Activated CD4-positive, alpha-beta memory T cell treated with anti-CD3 and anti-CD28 coated beads, Interleukin-2, amount 10 ng/mL, durations not matched to agents 7 days and 5 days (primary cell): ENCODE measurements at regions of chr17 and their contacts with region 1.

Region 1: DNA sequence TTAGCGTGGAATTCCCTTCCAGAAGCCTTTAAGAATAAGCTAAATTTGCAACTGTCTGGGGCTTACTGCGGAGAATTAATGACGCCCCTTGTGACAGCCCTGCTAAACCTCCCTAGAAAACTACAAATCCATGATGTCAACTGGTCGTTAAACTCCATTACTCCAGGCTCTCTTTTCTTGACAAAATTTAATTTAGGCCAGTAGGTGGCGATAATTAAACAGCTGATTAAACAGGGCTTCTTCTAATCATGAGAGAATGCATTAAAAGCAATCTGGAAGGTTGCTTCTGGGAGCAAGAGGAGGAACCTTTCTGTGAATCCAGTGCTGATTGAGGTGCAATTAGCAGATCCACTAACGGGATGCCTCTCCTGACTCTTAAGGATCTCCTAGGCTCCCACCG is 8.1 kb upstream of the NLRP1 start:
- DNase-seq: no peak
- H3K4me3 Mint-ChIP-seq: no peak overlapping the region
- H3K27ac Mint-ChIP-seq: no peak overlapping the region
- H3K4me1 Mint-ChIP-seq: peaks cover 2% of the 10 kb centered on the region
- H3K27me3 Mint-ChIP-seq: peaks cover 41% of the 10 kb centered on the region

Region 2: GRCh38 chr17:5571281-5571680 is 21.1 kb before region 1 on chr17:
- CTCF ChIA-PET with region 1: no interaction called
- POLR2A ChIA-PET with region 1: no interaction called
- DNase-seq: no peak
- H3K4me3 Mint-ChIP-seq: no peak overlapping the region
- H3K27ac Mint-ChIP-seq: no peak overlapping the region
- H3K4me1 Mint-ChIP-seq: peaks cover 24% of the 10 kb centered on the region
- H3K27me3 Mint-ChIP-seq: no peaks in the 10 kb centered on the region

Region 3: DNA sequence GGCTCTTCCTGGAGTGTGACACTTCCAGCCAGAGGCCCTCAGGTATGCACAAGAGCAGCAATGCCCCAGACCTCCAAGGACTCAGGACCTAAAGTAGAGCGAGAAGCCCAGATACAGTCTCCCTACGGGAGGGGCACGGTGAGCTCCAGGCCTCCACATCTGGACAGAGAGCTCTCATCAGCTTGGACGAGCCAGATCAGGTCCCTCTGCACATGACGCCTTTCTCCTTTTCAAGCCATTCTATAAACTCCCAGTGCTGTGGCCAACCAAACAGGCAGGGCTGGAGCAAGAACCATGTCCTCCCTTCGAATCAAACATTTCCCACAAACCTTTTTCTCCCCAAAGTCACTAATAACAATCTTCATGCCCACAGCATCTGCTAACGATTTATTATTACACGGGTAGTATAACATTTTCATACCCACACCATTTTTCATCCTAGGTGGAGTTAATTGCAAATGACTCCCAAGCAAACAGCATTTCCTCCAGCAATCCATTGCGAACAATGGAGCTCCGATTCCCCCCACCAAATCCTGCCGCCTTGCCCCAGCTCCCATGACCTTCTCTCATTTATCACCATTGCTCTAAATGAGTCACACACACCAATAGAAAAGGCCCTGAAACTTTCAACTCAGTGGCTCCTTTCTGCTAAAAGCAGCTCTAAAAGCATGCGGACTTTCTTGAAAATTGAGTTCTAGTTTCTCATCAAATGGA is 16.2 kb after region 1 on chr17:
- CTCF ChIA-PET with region 1: no interaction called
- POLR2A ChIA-PET with region 1: no interaction called
- DNase-seq: no peak
- H3K4me3 Mint-ChIP-seq: no peak overlapping the region
- H3K27ac Mint-ChIP-seq: no peak overlapping the region
- H3K4me1 Mint-ChIP-seq: peaks cover 20% of the 10 kb centered on the region
- H3K27me3 Mint-ChIP-seq: peaks cover 20% of the 10 kb centered on the region

Region 4: GRCh38 chr17:5619088-5619740 is 26.8 kb after region 1 on chr17:
- CTCF ChIA-PET with region 1: no interaction called
- POLR2A ChIA-PET with region 1: no interaction called
- DNase-seq: no peak
- H3K4me3 Mint-ChIP-seq: no peak overlapping the region
- H3K27ac Mint-ChIP-seq: no peak overlapping the region
- H3K4me1 Mint-ChIP-seq: no peaks in the 10 kb centered on the region
- H3K27me3 Mint-ChIP-seq: peaks cover 18% of the 10 kb centered on the region

Region 5: GRCh38 chr17:5706577-5707216 is 114.3 kb after region 1 on chr17:
- CTCF ChIA-PET with region 1: interaction called, 18 read pairs
- POLR2A ChIA-PET with region 1: interaction called, 4 read pairs
- DNase-seq: peak; percentile 61
- H3K4me3 Mint-ChIP-seq: no peak overlapping the region
- H3K27ac Mint-ChIP-seq: no peak overlapping the region
- H3K4me1 Mint-ChIP-seq: no peaks in the 10 kb centered on the region
- H3K27me3 Mint-ChIP-seq: peaks cover 21% of the 10 kb centered on the region

Region 6: GRCh38 chr17:6413065-6413464 is 820.7 kb after region 1 on chr17:
- CTCF ChIA-PET with region 1: interaction called, 11 read pairs
- POLR2A ChIA-PET with region 1: no interaction called
- DNase-seq: no peak
- H3K4me3 Mint-ChIP-seq: no peak overlapping the region
- H3K27ac Mint-ChIP-seq: no peak overlapping the region
- H3K4me1 Mint-ChIP-seq: no peaks in the 10 kb centered on the region
- H3K27me3 Mint-ChIP-seq: peaks cover 8% of the 10 kb centered on the region

Region 7: DNA sequence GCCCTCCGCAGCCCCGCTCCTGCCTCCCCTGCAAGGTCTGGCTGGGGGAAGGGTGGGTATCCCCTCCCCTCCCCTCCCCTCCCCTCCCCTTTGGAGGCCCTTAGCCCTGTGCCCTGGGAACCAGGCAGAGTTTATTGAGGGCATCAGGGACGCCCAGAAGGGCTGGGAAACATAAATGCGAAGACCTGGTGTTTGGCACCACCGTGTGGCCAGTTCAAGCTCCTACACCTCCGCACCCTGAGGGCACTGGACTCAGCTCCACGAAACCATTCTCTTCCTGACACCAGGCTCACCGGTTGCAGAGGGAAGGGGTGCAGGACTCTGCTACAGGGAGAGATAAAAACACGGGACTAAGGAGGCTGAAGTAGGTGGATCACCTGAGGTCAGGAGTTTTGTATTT is 843.6 kb after region 1 on chr17:
- CTCF ChIA-PET with region 1: interaction called, 15 read pairs
- POLR2A ChIA-PET with region 1: interaction called, 3 read pairs
- DNase-seq: peak; percentile 69
- H3K4me3 Mint-ChIP-seq: no peak overlapping the region
- H3K27ac Mint-ChIP-seq: no peak overlapping the region
- H3K4me1 Mint-ChIP-seq: no peaks in the 10 kb centered on the region
- H3K27me3 Mint-ChIP-seq: peaks cover 60% of the 10 kb centered on the region